ENCODE measurements at regions of chr4 and their contacts with region 1.

Region 1: DNA sequence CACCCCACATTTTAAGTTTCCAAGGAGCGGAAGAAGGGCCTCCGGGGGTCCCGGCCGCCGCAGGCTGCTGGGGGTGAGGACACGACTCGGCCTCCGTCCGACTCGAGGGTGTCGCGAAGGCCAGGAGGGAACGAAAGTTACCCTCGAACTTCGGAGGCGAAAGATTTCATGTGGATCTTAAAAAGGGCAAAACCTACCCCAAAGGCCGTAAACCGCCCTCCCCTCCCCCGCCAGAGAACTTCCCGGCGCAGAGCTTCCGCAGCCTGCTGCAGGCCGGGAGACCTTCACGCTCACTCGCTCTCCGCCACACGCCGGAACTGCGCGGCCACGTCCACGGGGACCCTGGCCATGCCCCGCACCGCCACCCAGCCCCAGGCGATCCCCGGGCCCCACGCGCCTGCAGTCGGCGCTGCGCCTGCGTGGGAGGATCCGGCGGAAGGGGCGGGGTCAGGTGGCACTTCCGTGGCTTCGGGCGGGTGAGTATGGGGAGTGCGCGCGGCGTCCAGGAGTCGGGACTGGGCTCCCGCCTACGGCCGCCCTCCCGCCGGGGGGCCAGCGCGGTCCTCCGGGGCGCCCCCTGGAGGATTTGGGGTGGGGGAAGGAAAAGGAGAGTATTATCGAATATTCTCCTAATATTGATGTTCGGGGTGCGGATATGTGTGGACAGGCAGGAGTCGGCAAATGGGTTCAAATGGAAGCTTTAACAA is at the start of gene MMAA:
- DNase-seq: peak; percentile 85 to 96 (median 90)
- H3K4me3 ChIP-seq: peak within 1 kb of the TSS; percentile 62 to 95 (median 83)
- H3K27ac ChIP-seq: peak within 1 kb of the TSS; percentile 52 to 95 (median 88)
- H3K27me3 ChIP-seq: no peaks in the 10 kb centered on the region
- CTCF ChIP-seq: peak; percentile 47 to 93 (median 71)
- total RNA-seq, gene MMAA: 4.6 to 14.0 (median 8.6) TPM

Region 2: DNA sequence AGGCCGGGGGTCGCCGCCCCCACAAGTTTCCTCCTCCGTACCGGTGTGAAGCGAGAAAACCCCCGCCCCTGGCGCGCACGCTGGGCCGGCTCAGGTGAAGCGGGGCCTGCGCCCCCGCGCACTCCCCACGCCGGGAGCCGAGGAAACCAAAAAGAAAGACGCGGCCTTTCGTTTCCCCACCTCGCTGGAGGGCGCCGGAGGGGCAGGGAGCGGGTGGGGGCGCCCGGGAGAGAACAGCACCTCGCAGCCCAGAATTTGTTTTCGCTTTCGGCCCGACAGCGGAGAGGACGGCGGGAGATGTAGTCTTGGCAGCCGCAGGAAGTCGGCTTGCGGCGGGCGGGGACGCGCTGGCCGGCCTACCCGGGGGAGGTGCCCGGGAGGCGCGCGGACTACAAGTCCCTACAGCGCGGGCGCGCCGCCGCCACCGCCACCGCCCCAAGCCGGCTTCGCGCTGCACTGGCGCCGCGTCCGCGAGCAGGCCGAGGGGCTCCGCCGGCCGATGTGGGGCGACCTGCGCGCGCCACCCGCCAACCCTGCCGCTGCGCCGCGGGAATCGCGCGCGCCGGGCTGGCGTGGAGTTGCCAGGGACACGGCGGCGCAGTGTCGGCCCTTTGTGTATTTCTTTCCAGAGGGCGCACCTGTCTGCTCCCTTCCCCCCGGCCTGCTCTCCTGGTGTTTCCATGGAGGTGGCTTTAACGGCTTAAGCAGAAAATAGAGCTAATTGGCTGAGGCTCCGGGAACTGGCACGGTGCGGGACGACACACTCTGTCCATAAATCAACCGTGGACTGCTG is 438.6 kb before region 1 on chr4 and contains the start of gene OTUD4:
- intact Hi-C with region 1: loop called in 1 of 2 experiments (anchors 10 kb)
- DNase-seq: peak; percentile 87 to 97 (median 94)
- H3K4me3 ChIP-seq: peak within 1 kb of the TSS; percentile 63 to 94 (median 83)
- H3K27ac ChIP-seq: peak within 1 kb of the TSS; percentile 85 to 99 (median 95)
- H3K27me3 ChIP-seq: no peaks in the 10 kb centered on the region
- CTCF ChIP-seq: peak in 39 of 56 donors; percentile 7 to 59 (median 32)
- total RNA-seq, gene OTUD4: 33.5 to 84.1 (median 49.7) TPM

Region 3: DNA sequence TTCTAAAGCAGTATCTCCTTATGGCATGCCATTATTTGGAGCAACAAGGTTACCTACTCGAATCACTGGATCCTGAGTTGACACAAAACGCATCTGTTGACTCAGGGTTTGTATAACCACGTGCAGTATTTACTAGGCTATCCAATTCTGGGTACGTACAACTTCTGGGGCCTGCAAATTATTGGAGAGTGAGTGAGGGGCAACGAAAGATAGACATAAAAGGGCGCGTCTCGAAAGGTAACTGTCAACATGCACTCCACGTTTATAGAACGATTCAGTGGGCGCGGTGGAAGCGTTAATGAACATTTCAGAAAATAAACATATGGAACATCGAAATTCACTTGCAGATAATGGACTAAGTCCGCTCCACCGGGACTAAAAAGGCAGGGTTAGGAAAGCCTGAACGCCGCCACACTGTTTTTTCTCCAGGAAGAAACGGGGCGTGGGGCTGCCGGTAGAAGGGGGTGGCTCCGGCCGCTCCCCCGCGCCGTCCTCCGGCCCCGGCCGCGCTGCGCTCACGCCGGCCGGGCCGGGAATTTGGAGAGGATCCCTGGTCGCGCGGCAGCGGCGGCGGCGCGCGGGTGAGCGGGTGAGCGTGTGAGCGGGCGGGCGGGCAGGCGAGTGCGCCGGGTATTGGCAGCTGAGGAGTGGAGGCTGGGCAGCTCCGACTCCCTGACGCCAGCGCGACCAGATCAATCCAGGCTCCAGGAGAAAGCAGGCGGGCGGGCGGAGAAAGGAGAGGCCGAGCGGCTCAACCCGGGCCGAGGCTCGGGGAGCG is 137.7 kb before region 1 on chr4 and contains the start of gene SMAD1:
- intact Hi-C with region 1: loop called in 1 of 2 experiments (anchors 5 kb)
- DNase-seq: peak; percentile 70 to 90 (median 85)
- H3K4me3 ChIP-seq: peak within 1 kb of the TSS; percentile 48 to 96 (median 86)
- H3K27ac ChIP-seq: peak within 1 kb of the TSS; percentile 62 to 98 (median 93)
- H3K27me3 ChIP-seq: no peaks in the 10 kb centered on the region
- CTCF ChIP-seq: peak in 7 of 56 donors; percentile 1 to 25 (median 11)
- total RNA-seq, gene SMAD1: 18.8 to 78.1 (median 34.1) TPM

Region 4: DNA sequence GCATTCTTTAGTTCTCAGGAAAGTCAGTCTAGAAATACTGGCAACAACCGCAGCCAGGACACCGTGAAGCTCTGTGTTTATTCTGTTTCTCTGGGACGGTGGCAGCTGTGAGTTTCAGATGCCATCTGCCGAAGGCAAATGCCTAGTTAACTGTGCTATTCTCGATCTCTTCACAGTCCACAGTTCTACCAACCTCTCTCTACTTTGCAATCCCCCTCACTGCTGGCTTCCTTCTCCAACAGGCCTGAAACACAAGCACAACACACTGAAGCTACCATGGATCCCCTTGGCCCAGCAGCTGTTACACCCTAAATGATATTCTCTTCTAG is 200.7 kb after region 1 on chr4:
- intact Hi-C with region 1: loop called in 1 of 2 experiments (anchors 5 kb)
- DNase-seq: peak in 9 of 10 donors; percentile 25 to 84 (median 70)
- H3K4me3 ChIP-seq: peak overlapping the region in 55 of 59 donors; percentile 6 to 59 (median 33)
- H3K27ac ChIP-seq: peak overlapping the region in 53 of 59 donors; percentile 1 to 92 (median 54)
- H3K27me3 ChIP-seq: no peaks in the 10 kb centered on the region
- CTCF ChIP-seq: peak in 28 of 56 donors; percentile 5 to 49 (median 23)

Region 5: DNA sequence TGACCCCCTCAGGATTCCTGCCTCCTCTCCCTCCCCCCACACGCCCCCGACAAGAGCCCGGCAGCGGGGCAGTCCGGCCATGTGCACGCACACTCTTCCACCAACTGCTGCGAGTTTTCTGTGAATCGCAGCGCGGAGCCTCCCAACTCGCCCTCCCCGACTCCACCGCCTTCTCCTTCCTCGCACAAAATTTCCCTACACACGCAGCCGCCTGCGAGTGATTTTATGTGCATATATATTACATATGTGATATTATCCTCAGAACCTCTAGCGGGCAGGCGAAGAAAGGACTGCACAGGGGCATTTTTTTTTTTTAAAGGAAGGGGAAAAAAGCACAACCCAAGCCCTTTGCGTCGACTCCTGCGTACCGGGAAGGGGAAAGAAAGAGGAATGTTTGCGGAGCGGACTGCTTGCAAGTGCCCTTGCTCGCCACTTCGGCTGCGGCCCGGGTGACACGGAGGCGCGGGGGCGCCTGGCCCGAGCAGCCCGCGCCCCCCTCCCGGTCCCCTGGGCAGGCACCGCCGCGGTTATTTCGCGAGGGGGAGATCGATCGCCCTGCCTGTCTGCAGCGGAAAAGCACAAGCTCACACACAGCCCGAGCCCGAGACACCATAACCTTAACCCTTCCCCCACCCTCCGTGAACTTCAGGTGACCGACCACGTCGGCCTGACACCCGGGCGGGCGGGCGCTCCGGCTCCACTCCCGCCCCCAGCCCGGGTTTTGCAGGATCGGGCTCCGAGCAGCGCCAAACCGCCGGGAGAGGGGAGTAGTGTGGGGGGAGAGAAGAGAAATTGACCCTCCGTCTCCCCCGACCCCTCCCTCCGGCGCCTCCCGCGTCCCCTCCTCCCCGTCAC is 317.3 kb after region 1 on chr4:
- intact Hi-C with region 1: loop called in 1 of 2 experiments (anchors 10 kb)
- DNase-seq: peak; percentile 42 to 76 (median 57)
- H3K4me3 ChIP-seq: peak overlapping the region; percentile 58 to 92 (median 79)
- H3K27ac ChIP-seq: peak overlapping the region; percentile 73 to 98 (median 95)
- H3K27me3 ChIP-seq: no peaks in the 10 kb centered on the region
- CTCF ChIP-seq: peak in 23 of 56 donors; percentile 3 to 37 (median 23)

Measured in dorsolateral prefrontal cortex (tissue), 120 donors.